HAP-1 (cell line): ENCODE measurements at regions of chr5 and their contacts with region 1.

Region 1: GRCh38 chr5:172283020-172283861 is at the start of gene UBTD2:
- DNase-seq: peak; percentile 72 to 89
- H3K4me3 ChIP-seq: peak within 1 kb of the TSS; percentile 89
- H3K4me1 ChIP-seq: peaks cover 20% of the 10 kb centered on the region
- H3K27me3 ChIP-seq: no peaks in the 10 kb centered on the region

Region 2: DNA sequence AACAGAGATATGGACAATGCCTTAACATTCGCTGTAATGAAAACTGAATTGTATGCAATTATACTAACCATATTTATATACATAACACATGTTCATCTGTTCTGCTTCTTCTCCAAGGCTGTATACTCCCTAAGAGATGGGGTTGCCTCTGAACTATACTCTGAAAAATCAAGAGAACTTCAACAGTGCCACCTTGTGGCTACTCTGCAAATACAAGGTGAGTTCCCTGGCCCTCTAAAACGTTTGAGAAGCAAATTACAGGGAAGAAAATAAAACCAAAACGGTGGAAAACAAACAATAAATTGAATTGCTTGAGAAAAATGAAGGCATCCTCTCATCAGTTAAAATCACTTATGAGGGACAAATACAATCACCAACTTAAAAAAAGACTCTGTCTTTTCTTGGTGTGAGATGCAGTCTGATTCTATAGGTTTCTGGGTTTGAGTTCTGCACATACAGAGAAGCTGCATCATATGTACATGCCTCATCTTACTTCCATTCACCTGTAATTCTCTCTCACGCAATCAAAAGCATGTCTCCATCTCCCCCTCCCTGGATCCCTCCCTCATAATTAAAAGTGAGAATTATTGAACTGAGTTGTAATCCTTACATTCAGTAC is 375.4 kb before region 1 on chr5:
- in situ Hi-C with region 1: loop called (anchors 25 kb)
- DNase-seq: peak; percentile 59 to 68
- H3K4me3 ChIP-seq: no peak overlapping the region
- H3K4me1 ChIP-seq: no peaks in the 10 kb centered on the region
- H3K27me3 ChIP-seq: no peaks in the 10 kb centered on the region